CD4-positive, alpha-beta T cell (primary cell): ENCODE measurements at regions of chr11 and their contacts with region 1.

Region 1: DNA sequence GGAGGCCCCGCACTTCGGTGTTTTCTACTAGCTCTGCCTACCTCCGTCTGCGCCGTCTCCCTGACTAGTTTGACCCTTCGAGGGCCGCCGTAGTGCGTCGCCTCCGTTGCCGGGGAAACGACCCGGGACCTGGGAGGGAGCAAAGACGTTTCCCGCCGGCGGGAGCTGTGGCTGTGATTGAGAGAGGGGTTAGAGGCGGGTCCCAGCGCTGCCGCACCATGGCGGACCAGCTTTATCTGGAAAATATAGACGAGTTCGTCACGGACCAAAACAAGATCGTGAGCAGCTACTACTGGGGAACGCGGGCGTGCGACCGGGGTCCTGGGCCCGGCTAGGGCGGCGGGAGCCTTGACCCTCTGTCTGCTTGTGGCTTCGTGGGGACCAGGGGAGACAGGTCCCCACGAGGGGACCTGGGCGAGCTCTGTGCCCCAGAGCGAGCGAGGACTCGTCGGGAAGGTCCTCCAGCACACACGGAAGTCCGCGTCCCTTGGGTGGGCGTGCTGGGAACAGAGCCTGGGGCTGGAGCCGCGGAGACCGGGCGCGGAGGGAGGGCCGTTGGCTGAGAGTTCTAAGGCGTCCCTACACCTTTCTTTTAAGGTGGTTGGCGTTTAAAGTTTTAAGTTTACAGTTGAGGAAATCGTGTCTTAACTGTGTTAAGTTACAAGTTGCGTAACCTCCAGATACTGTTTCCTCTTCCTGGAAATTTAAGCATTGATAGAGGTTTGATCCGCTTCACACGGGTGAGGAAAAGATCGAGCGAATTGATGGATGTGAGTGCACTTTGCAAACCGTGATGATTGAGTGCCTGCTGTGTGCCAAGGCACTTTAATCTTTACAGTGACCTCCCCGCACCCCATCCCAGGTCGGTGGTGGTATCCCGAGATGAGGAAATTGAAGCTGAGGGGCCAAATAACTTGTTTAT is at the start of gene POLD3:
- DNase-seq: peak; percentile 91 to 96 (median 94)
- ATAC-seq: peak; percentile 97
- H3K4me3 ChIP-seq: peak within 1 kb of the TSS; percentile 84
- H3K4me3 Mint-ChIP-seq: peak within 1 kb of the TSS; percentile 97
- H3K27ac ChIP-seq: peak within 1 kb of the TSS; percentile 85 to 90
- H3K27ac Mint-ChIP-seq: peak within 1 kb of the TSS; percentile 92
- H3K4me1 ChIP-seq: peaks cover 13% of the 10 kb centered on the region
- H3K4me1 Mint-ChIP-seq: peaks cover 28% of the 10 kb centered on the region
- H3K27me3 ChIP-seq: no peaks in the 10 kb centered on the region
- H3K27me3 Mint-ChIP-seq: no peaks in the 10 kb centered on the region
- CTCF ChIP-seq: no peak
- total RNA-seq, gene POLD3: 4.6 to 5.2 TPM

Region 2: DNA sequence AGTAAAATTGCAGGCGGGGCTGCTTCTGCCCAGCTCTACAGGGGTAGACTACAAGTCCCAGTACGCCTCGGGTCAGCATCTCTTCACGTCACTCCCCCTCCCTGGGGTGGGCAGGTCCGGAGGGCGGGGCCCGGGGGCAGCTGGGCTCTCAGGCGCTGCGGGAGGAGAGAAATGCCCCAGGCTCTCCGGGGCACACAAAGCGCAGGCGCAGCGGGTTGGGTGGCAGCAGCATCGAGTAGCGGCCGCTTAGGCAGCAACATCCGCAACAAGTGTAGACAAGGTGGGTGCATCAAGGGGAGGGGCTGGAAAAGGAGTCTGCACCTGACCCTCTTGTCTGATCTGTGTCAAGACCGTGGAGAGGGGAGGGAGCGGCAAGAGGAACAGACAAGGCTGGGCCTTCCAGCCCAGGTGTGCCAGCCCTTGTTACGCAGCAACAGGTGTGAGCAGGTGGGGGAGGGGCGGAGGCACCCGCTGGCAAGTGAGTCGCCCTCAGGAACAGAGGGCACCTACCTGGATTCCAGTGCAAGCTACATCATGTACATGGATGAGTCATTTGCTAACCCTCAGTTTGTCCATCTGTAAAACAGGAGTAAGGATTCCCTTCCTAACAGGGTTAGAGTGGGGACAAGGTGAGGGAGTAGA is 945.1 kb before region 1 on chr11:
- CTCF ChIA-PET with region 1: no interaction called
- POLR2A ChIA-PET with region 1: no interaction called
- intact Hi-C with region 1: loop called in 1 of 2 experiments (anchors 5 kb)
- DNase-seq: peak; percentile 90 to 97 (median 94)
- ATAC-seq: peak; percentile 96
- H3K4me3 ChIP-seq: peak overlapping the region; percentile 55
- H3K4me3 Mint-ChIP-seq: peak overlapping the region; percentile 90
- H3K27ac ChIP-seq: peak overlapping the region in 1 of 2 donors; percentile 34
- H3K27ac Mint-ChIP-seq: peak overlapping the region; percentile 91
- H3K4me1 ChIP-seq: peaks cover 25% of the 10 kb centered on the region
- H3K4me1 Mint-ChIP-seq: peaks cover 28% of the 10 kb centered on the region
- H3K27me3 ChIP-seq: no peaks in the 10 kb centered on the region
- H3K27me3 Mint-ChIP-seq: no peaks in the 10 kb centered on the region
- CTCF ChIP-seq: no peak

Region 3: DNA sequence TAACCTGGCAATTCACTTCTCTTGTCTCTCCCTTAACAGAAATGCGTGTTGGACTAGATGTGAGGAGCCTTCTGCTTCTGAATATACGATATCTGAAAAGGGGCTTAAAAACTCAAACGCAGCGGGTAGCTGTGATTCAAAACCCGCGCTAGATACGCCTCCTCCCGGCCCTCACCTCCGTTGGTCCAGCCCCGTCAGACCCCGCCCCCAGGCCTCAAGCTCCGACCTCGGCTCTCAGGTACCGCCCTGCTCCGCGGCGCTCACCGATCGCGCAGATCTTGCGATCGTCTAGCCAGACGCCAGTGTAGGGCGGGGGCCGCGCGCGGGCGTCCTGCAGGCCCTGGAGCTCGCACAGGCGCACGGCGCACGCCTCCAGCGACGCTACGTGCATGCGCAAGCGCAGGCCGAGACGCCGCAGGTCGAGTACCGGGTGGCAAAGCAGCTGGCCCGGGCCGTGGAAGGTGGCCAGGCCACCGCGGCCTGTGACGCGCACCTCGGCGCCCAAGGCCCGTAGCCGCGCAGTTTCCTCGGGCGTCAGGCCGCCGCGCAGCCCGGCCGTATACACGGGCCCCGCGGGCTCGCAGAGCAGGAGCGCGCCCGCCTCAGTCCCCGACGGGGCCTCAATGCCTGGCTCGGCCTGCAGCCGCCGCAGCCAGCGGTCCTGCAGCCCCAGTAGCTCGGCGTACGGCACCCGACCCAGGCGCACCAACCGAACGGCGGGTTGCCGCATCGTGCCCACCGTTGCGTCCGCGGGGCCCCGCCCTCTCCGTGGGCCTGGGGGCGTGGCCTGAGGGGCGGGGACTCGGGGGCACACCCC is 99.5 kb before region 1 on chr11 and contains the start of gene LIPT2:
- CTCF ChIA-PET with region 1: interaction called, 5 read pairs
- POLR2A ChIA-PET with region 1: interaction called, 51 read pairs
- intact Hi-C with region 1: loop called (anchors 2 to 5 kb)
- DNase-seq: peak; percentile 94 to 99 (median 98)
- ATAC-seq: peak; percentile 95
- H3K4me3 ChIP-seq: peak within 1 kb of the TSS; percentile 66
- H3K4me3 Mint-ChIP-seq: peak within 1 kb of the TSS; percentile 91
- H3K27ac ChIP-seq: peak within 1 kb of the TSS; percentile 61 to 94
- H3K27ac Mint-ChIP-seq: peak within 1 kb of the TSS; percentile 86
- H3K4me1 ChIP-seq: peaks cover 12% of the 10 kb centered on the region
- H3K4me1 Mint-ChIP-seq: peaks cover 41% of the 10 kb centered on the region
- H3K27me3 ChIP-seq: no peaks in the 10 kb centered on the region
- H3K27me3 Mint-ChIP-seq: no peaks in the 10 kb centered on the region
- CTCF ChIP-seq: no peak
- total RNA-seq, gene LIPT2: 10.7 to 10.9 TPM

Region 4: GRCh38 chr11:74532501-74533246 is 60.0 kb before region 1 on chr11:
- CTCF ChIA-PET with region 1: no interaction called
- POLR2A ChIA-PET with region 1: no interaction called
- intact Hi-C with region 1: no loop called
- DNase-seq: no peak
- ATAC-seq: no peak
- H3K4me3 ChIP-seq: no peak overlapping the region
- H3K4me3 Mint-ChIP-seq: no peak overlapping the region
- H3K27ac ChIP-seq: no peak overlapping the region
- H3K27ac Mint-ChIP-seq: no peak overlapping the region
- H3K4me1 ChIP-seq: no peaks in the 10 kb centered on the region
- H3K4me1 Mint-ChIP-seq: no peaks in the 10 kb centered on the region
- H3K27me3 ChIP-seq: no peaks in the 10 kb centered on the region
- H3K27me3 Mint-ChIP-seq: peaks cover 3% of the 10 kb centered on the region
- CTCF ChIP-seq: no peak

Region 5: DNA sequence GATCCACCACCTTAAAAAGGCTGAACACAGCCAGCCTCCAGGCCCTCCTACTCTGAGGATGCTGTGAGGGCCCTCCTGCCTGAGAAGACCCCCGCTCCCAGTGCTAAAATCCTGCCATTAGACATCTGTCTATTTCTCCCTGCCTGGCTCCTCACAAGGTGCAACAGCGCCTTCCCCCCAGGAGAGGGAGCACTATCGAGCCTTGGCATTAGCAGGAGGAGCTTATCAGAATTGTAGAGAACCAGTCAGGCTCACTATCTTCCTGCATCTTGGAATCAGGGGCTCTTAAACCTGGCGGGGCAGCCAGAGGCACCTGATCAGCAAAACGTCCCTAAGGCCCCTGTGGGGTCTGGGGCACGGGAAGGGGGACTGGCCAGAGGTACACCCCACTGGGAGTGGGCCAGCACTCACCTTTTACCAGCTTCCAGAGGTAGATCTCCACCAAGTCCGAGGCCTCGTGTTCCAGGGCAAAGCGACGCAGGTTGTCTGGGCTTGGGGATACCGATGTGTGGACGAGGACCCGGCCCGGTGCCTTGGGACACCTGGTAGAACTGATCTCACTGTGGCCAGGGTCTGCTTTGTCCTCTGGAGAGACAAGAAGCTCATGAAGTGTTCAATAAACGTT is 109.8 kb after region 1 on chr11:
- CTCF ChIA-PET with region 1: no interaction called
- POLR2A ChIA-PET with region 1: no interaction called
- intact Hi-C with region 1: no loop called
- DNase-seq: peak; percentile 20 to 74 (median 45)
- ATAC-seq: peak; percentile 76
- H3K4me3 ChIP-seq: no peak overlapping the region
- H3K4me3 Mint-ChIP-seq: no peak overlapping the region
- H3K27ac ChIP-seq: no peak overlapping the region
- H3K27ac Mint-ChIP-seq: no peak overlapping the region
- H3K4me1 ChIP-seq: no peaks in the 10 kb centered on the region
- H3K4me1 Mint-ChIP-seq: no peaks in the 10 kb centered on the region
- H3K27me3 ChIP-seq: no peaks in the 10 kb centered on the region
- H3K27me3 Mint-ChIP-seq: peaks cover 3% of the 10 kb centered on the region
- CTCF ChIP-seq: peak; percentile 85

Region 6: DNA sequence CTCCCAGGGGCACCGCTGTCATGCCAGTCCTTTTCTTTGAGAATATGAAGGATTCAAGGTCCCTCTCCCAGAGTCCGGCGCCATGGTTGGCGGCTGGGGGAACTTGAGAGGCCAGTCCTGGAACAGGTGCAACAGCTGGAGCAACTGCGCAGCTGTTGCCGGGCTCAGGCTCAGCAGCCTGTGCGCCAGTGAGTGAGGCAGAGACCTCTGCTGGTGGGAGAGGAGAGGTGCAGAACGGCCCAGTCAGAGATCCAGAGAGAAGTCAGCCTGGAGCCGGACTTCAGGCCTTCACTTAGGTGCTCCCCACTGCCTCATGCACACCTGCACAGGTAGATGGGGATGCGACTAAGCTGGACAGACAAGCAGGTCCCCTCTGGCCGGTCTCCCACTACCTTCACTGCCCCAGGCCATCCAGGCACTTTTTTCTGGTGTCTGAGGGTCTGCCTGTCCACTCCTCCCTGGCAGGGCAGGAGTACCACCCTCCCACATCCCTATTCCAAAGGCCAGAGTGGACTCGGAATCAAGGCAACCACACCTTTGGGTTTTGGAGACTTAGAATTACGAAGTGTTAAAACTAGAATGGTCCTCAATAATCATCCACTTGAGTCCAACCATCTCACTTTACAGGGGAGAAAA is 134.0 kb after region 1 on chr11:
- CTCF ChIA-PET with region 1: no interaction called
- POLR2A ChIA-PET with region 1: no interaction called
- intact Hi-C with region 1: no loop called
- DNase-seq: peak; percentile 21 to 77 (median 48)
- ATAC-seq: peak; percentile 99
- H3K4me3 ChIP-seq: no peak overlapping the region
- H3K4me3 Mint-ChIP-seq: no peak overlapping the region
- H3K27ac ChIP-seq: no peak overlapping the region
- H3K27ac Mint-ChIP-seq: no peak overlapping the region
- H3K4me1 ChIP-seq: peaks cover 10% of the 10 kb centered on the region
- H3K4me1 Mint-ChIP-seq: no peaks in the 10 kb centered on the region
- H3K27me3 ChIP-seq: peaks cover 14 to 16% of the 10 kb centered on the region in 2 experiments
- H3K27me3 Mint-ChIP-seq: peaks cover 34% of the 10 kb centered on the region
- CTCF ChIP-seq: peak; percentile 83

Region 7: DNA sequence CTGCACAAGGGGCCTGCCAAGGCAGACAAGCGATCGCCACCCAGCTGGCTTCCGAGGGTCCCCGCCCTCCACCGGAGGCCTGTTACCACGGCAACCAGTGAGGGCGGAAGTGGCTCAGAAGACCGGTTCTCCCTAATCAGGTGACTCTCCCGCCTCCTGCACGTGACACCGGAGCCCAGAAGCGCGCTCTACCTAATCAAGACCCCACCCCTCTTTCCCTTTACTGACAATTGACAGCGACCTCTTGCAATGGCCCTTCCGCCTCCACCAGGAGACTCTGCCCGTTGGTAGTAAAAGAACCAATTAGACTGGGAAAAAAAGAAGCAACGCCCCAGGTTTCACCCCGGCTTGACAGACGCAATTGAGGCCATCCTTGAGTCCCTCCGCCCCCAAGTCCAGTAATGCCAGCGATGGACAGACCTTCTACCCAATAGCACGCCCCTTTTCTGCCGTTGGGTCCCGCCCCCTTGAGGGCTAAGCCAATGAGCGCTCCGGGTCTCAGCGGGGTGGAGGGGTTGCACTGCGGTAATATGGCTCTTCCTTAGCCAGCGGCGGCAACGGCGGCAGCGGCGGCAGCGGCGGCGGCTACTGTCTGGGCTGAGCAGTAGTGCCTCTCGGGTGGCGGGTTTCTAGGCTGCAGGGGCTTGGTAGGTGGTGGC is 1222.1 kb after region 1 on chr11 and contains the start of gene UVRAG:
- CTCF ChIA-PET with region 1: no interaction called
- POLR2A ChIA-PET with region 1: no interaction called
- intact Hi-C with region 1: loop called in 1 of 2 experiments (anchors 10 kb)
- DNase-seq: peak; percentile 96 to 99 (median 97)
- ATAC-seq: peak; percentile 86
- H3K4me3 ChIP-seq: peak within 1 kb of the TSS; percentile 88
- H3K4me3 Mint-ChIP-seq: peak within 1 kb of the TSS; percentile 95
- H3K27ac ChIP-seq: peak within 1 kb of the TSS; percentile 78 to 83
- H3K27ac Mint-ChIP-seq: peak within 1 kb of the TSS; percentile 92
- H3K4me1 ChIP-seq: peaks cover 30% of the 10 kb centered on the region
- H3K4me1 Mint-ChIP-seq: peaks cover 29% of the 10 kb centered on the region
- H3K27me3 ChIP-seq: no peaks in the 10 kb centered on the region
- H3K27me3 Mint-ChIP-seq: no peaks in the 10 kb centered on the region
- CTCF ChIP-seq: no peak
- total RNA-seq, gene UVRAG: 16.5 to 19.5 TPM

Region 8: DNA sequence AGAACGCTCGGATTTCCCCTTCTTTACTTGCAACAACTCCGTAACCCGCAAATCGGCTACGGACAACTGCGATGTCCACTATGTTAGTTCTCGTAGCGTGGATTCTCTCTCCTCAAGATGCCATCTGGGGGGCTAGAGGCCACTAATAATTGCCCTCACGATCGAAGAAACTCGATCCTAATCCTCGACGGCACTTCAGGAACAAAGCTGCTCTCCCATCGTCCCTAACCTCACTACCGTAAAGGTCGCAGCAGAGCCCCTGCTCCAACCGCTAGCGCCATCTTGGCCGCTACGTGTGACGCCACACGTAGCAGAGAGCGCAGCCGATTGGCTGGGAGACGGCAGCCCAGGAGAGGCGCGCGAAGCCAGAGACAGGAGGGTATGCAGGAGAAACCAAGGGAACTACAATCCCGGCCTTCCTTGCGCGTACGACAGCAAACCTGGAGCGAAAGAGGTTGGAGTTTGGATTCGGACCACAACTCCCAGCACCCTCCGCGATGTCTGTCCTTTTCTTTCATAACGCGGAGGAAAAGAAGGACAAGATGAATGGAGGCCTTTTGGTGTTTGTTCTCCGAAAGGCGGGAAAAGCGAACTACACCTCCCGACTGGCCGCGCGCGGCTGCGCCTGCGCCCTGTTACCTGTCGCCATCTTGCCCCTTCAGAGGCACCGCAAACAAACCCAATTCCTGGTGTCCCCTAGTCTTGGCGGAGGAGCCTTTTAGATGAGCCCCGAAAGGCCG is 1851.9 kb after region 1 on chr11 and contains the start of gene EMSY:
- CTCF ChIA-PET with region 1: no interaction called
- POLR2A ChIA-PET with region 1: no interaction called
- intact Hi-C with region 1: loop called in 1 of 2 experiments (anchors 10 kb)
- DNase-seq: peak; percentile 82 to 98 (median 88)
- ATAC-seq: peak; percentile 91
- H3K4me3 ChIP-seq: peak within 1 kb of the TSS; percentile 78
- H3K4me3 Mint-ChIP-seq: peak within 1 kb of the TSS; percentile 94
- H3K27ac ChIP-seq: peak within 1 kb of the TSS; percentile 76 to 91
- H3K27ac Mint-ChIP-seq: peak within 1 kb of the TSS; percentile 95
- H3K4me1 ChIP-seq: peaks cover 22% of the 10 kb centered on the region
- H3K4me1 Mint-ChIP-seq: peaks cover 53% of the 10 kb centered on the region
- H3K27me3 ChIP-seq: no peaks in the 10 kb centered on the region
- H3K27me3 Mint-ChIP-seq: no peaks in the 10 kb centered on the region
- CTCF ChIP-seq: no peak
- total RNA-seq, gene EMSY: 20.9 to 21.8 TPM